Activated T-helper 2 cell treated with anti-CD3 and anti-CD28 coated beads, Interferon-gamma antibody, Interleukin-2, Interleukin-4, amounts not matched to agents 10 μg/mL and 5 μg/mL and 100 μg/mL, durations not matched to agents 14 hours and 24 hours and 36 hours (primary cell): ENCODE measurements at regions of chr6 and their contacts with region 1.

Region 1: DNA sequence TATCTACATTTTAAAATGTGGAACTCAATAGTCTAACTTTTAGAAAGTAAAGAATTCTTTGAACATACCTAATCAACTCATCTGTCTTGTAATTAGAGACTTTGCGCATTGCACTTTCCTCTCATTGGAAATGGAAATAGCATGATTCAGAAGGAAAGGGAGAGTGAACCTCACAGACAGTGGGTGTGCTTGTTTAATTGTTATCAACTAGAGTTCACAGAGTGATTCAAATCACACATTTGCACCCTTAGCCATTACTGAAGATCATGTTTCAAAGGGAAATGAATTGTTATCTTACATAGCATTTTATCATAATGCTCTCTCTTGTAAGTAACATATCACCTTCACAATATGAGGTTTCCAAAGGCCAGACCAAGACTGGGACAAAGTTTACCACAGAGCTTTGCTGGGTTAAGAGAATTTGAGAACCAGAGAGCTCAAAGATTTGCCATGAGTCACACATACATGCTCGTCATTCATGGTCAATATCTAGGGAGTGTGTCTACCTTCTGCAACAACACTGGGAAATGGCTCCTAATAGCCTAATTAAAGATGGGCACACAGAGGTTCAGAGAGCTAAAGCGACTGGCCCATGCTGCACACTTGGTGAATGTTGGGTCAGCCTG is 21.5 kb downstream of the GSTA3 start:
- DNase-seq: no peak
- H3K4me3 Mint-ChIP-seq: no peak overlapping the region
- H3K27ac Mint-ChIP-seq: peak overlapping the region; percentile 82
- H3K4me1 Mint-ChIP-seq: peaks cover 41% of the 10 kb centered on the region
- H3K27me3 Mint-ChIP-seq: no peaks in the 10 kb centered on the region

Region 2: GRCh38 chr6:52976591-52977035 is 88.6 kb after region 1 on chr6:
- intact Hi-C with region 1: loop called (anchors 2 kb)
- DNase-seq: no peak
- H3K4me3 Mint-ChIP-seq: peak overlapping the region; percentile 21
- H3K27ac Mint-ChIP-seq: peak overlapping the region; percentile 91
- H3K4me1 Mint-ChIP-seq: peaks cover 51% of the 10 kb centered on the region
- H3K27me3 Mint-ChIP-seq: no peaks in the 10 kb centered on the region

Region 3: DNA sequence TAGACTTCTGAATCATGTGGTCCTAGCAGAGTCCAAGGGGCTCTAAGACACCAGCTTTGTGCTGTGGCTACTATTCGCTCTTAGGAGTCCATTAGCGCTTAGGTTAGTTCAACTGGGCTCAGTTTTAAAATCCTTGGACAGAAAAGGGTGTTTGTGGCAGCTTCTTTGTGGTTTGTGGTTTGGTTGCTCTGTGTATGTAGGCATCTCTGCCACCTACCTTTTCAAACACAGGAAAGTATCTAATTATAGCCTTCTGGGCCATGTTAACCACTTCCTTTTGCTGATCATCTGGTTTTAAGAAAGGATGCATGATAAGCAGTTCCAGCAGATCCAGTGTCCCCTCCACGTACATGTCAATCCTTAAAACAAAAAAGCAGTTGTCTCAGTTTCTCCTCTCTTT is 96.2 kb after region 1 on chr6:
- intact Hi-C with region 1: loop called (anchors 1 kb)
- DNase-seq: peak; percentile 43
- H3K4me3 Mint-ChIP-seq: peak overlapping the region; percentile 37
- H3K27ac Mint-ChIP-seq: peak overlapping the region; percentile 90
- H3K4me1 Mint-ChIP-seq: peaks cover 73% of the 10 kb centered on the region
- H3K27me3 Mint-ChIP-seq: no peaks in the 10 kb centered on the region